AG04450 (cell line): ENCODE measurements at regions of chr15 and their contacts with region 1.

Region 1: DNA sequence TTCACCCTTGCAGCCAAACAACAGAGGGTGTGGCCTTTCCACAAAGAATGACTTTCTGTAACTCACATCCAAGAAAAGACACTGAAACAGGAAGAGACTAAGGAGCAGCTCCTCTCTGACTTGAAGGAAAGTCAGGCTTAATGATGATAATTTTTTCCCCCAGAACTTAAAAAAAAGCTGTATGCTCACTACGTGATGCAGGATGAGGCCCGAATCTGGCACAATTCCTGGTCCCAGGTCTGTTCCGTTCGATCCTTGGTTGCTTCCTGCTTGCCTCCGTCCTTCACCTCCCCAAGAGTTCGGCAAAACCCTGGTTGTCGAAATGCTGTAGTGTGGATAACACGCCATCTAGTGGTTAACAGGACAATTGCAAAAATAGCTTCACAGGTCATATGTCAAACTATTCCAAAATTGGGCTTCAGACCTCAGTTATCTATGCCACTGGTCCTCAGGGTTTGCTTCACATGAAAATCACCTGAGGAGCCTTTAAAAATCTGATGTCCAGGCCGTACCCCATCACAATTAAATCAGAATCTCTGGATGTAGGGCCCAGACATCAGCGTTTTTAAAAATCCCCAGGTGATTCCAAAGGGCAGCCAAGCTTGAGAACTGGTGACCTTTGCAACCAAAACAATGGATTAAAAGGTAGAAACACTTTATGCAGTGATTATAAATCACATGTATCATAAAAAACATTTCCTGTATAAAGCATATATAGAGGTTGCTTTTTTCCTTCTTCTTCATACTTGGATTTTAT is 28.1 kb upstream of the SYNM start:
- DNase-seq: peak; percentile 67
- H3K4me3 ChIP-seq: peak overlapping the region; percentile 48
- H3K27ac ChIP-seq: no peak overlapping the region
- H3K27me3 ChIP-seq: no peaks in the 10 kb centered on the region
- CTCF ChIP-seq: peak; percentile 91

Region 2: DNA sequence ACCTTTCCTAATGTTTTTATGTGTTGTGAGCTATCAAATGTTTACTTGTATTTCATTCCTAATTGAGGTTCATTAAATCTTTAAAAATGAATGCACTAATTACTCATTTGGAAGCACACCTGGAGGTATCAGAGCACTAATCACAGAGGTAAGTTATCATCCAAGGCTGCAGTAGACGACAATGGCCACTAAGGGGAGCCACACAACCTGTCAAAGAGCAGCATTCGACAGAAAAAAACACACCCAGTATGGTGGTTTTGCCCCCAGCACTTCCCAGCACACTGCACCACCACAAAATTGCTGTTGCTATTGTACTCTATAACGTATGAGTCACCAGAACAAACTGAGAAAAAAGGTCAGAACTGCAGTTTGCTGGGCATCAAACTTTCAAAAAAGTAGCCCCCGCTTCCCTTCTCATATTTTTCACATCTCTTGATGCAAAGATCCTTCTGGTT is 634.3 kb before region 1 on chr15:
- CTCF ChIA-PET with region 1: interaction called, 69 read pairs
- POLR2A ChIA-PET with region 1: no interaction called
- DNase-seq: peak; percentile 34
- H3K4me3 ChIP-seq: no peak overlapping the region
- H3K27ac ChIP-seq: no peak overlapping the region
- H3K27me3 ChIP-seq: no peaks in the 10 kb centered on the region
- CTCF ChIP-seq: peak; percentile 91

Region 3: GRCh38 chr15:98647774-98648653 is 428.7 kb before region 1 on chr15 and contains the start of gene IGF1R:
- CTCF ChIA-PET with region 1: interaction called, 20 read pairs
- POLR2A ChIA-PET with region 1: no interaction called
- DNase-seq: peak; percentile 54
- H3K4me3 ChIP-seq: peak within 1 kb of the TSS; percentile 88
- H3K27ac ChIP-seq: peak within 1 kb of the TSS; percentile 80
- H3K27me3 ChIP-seq: peaks cover 17% of the 10 kb centered on the region
- CTCF ChIP-seq: no peak
- polyA plus RNA-seq, gene IGF1R: 21.6 and 35.4 TPM in 2 replicates

Region 4: DNA sequence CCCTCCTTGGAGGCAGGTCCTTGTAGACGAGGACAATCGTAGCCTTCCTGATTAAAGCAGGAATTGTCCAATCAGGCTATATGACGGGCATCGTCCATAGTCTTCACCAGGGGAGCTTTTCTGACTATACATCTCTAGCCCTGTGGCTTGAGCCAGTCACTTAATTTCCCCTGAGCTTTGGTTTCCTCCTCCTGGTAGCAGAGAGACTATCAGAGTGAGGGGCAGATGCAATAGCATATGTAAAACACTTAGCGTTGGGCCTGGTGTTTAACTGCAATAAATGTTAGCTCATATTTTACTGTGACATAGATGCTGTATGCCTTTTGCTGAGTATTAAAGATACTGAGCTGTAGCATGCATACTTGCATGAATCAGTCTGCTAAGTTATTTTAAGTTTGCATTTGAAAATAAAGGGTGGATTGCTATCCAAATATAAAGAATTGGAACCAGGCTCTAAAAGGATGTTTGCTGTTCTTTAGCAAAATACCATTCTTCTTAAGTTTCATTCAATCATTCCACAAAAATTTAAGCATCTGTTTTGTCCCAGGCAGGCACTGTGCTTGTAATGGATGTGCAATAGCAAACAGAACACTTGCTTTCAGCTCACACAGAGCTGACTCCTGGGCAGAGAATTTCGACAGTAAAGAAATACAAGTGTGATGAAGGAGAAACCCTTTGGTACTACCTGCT is 220.4 kb before region 1 on chr15:
- CTCF ChIA-PET with region 1: interaction called, 16 read pairs
- POLR2A ChIA-PET with region 1: no interaction called
- DNase-seq: peak; percentile 90
- H3K4me3 ChIP-seq: no peak overlapping the region
- H3K27ac ChIP-seq: peak overlapping the region; percentile 91
- H3K27me3 ChIP-seq: no peaks in the 10 kb centered on the region
- CTCF ChIP-seq: no peak

Region 5: DNA sequence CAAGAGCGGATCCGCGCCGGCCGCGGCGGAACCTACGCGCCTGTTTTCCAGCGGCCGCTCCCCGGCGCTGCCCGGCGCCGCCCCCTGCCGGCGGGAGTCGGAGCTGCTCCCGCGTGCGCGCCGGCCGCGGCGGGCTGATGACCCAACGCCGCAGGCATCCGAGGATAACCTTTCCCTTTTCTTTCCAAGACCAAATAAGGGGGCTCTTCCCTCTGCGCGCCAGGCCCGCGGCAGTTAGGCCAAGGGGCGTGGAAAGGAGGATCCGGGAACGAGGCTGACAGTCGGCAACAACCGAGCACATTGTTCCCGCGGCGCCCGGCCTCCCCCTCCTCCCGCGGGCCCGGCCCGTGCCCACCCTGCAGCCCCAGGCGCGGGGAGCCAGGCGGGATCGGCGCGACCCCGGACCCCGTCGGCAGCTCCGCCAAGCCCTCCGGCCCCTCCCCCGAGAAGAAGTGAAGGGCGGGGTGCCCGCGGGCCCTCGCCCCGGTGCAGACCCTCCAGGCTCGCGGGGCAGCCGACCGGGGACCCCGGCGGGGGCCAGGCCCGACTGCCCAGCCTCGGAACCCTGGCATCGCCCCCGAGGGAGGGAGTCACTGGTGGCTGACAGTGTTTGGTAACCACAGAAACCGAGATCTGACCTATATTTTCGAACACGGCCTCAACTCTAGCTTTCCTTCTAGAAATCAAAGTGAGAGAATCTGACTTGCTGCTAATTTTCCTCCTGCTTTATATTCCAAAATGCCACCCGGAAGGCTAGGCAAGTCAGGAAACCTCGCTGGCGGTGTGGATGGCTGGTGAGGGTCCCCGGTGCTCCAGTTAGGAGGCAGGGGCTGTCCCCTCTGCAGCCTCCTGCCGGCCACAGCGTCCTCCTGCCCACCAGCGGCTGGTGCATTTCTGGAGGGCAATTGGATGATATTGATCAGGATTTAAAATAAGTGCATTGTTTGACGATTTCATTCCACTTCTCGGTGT is 17.4 kb before region 1 on chr15:
- CTCF ChIA-PET with region 1: interaction called, 23 read pairs
- POLR2A ChIA-PET with region 1: no interaction called
- DNase-seq: peak; percentile 77
- H3K4me3 ChIP-seq: peak overlapping the region; percentile 57
- H3K27ac ChIP-seq: peak overlapping the region; percentile 52
- H3K27me3 ChIP-seq: no peaks in the 10 kb centered on the region
- CTCF ChIP-seq: peak; percentile 50

Region 6: DNA sequence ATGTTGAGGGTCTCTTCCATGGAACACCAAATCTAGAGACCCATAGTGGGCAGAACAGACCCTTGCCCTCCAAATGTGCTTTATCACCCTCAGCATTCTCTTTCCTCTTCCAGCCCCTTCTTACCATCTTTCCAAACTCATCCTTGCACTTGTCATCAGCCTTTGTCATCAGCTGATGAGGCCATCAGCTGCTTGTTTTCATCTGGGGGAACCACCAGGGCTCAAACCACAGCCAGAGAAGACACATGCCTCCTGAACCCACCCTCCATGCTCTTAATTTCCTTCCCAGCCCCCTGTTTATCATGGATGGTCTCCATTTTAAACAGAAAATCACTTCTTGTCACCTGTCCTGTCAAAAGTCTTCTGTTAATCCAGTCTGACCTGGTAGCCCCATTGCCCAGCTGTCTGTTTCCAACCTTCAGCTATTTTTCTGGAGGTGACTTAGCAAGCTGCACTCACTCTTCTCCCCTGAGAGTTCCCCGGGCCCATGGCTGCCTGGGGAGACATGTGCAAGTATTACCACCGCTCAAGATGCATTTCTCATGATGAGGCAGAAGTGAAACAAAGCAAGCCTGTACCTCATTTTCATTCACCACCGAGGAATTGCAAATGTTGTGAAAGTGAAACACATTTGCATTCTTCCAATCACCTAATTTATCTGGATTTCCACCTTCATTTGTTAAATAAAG is 13.4 kb after region 1 on chr15:
- CTCF ChIA-PET with region 1: interaction called, 19 read pairs
- POLR2A ChIA-PET with region 1: no interaction called
- DNase-seq: no peak
- H3K4me3 ChIP-seq: no peak overlapping the region
- H3K27ac ChIP-seq: no peak overlapping the region
- H3K27me3 ChIP-seq: peaks cover 2% of the 10 kb centered on the region
- CTCF ChIP-seq: no peak

Region 7: DNA sequence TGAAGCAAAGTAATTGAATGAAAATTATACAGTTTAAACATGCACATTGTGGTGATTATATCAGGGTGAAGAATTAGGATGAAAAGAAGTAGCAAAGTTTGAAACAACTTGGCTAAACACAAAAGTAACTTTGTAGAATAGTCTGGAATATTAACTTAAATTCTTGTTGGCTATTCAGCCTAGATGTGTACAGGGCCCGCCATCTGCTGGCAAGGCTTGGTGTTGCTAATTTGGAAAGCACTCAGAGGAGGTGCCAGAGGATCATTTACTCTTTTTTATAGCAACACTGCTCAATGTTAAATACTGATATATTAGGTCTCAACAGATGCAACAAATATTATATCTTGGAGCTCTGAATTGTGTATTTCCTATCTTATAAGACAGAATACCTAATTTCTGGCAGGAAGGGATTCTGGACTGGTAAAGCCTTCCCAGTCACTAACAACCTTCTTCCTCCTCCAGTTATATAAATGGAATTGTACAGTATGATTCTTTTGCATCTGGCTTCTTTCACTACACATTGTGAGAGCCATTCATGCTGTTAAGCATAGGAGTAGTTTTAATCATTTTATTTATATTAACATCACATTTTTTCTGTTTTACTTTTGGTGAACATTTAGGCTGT is 136.6 kb after region 1 on chr15:
- CTCF ChIA-PET with region 1: interaction called, 11 read pairs
- POLR2A ChIA-PET with region 1: no interaction called
- DNase-seq: peak; percentile 27
- H3K4me3 ChIP-seq: no peak overlapping the region
- H3K27ac ChIP-seq: no peak overlapping the region
- H3K27me3 ChIP-seq: no peaks in the 10 kb centered on the region
- CTCF ChIP-seq: peak; percentile 96